Activated CD4-positive, alpha-beta memory T cell treated with anti-CD3 and anti-CD28 coated beads for 36 hours (primary cell): ENCODE measurements at regions of chr15 and their contacts with region 1.

Region 1: DNA sequence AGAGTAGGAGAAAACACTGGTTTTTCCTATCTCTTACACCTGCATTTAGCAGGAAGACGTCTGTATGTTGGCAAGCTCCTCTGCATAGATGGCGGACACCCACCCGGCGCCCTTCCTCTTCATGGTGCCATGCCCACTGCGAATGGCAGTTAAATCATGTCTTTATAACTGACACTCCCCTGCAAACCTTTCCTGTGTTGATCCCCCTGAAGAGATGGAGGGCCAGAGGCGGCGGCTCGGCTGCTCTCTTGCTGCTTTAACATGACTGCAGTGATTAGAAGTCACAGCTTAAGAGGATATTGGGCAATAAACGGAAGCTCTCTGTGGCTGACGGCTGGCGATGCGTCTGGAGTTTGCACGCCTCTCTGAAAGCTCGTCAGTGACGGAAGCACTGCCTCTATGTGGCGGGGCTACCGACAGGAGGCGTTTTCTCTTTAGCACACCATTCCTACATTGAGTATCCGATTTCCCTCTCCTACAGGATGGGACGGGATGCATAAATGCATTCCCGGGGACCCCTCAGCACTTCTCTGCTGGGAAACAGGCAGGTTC is 25.5 kb upstream of the SNRPA1 start:
- DNase-seq: peak; percentile 81
- H3K4me3 Mint-ChIP-seq: peak overlapping the region; percentile 64
- H3K27ac Mint-ChIP-seq: peak overlapping the region; percentile 59
- H3K4me1 Mint-ChIP-seq: peaks cover 11% of the 10 kb centered on the region
- H3K27me3 Mint-ChIP-seq: no peaks in the 10 kb centered on the region

Region 2: GRCh38 chr15:101277038-101277882 is 43.3 kb before region 1 on chr15 and contains the start of gene SELENOS:
- CTCF ChIA-PET with region 1: no interaction called
- POLR2A ChIA-PET with region 1: no interaction called
- intact Hi-C with region 1: no loop called
- DNase-seq: peak; percentile 90
- H3K4me3 Mint-ChIP-seq: peak within 1 kb of the TSS; percentile 92
- H3K27ac Mint-ChIP-seq: peak within 1 kb of the TSS; percentile 81
- H3K4me1 Mint-ChIP-seq: peaks cover 29% of the 10 kb centered on the region
- H3K27me3 Mint-ChIP-seq: no peaks in the 10 kb centered on the region
- total RNA-seq, gene SELENOS: 30.9 to 31.7 TPM

Region 3: GRCh38 chr15:101288908-101289513 is 31.6 kb before region 1 on chr15:
- CTCF ChIA-PET with region 1: interaction called, 10 read pairs
- POLR2A ChIA-PET with region 1: interaction called, 12 read pairs
- intact Hi-C with region 1: no loop called
- DNase-seq: peak; percentile 6
- H3K4me3 Mint-ChIP-seq: no peak overlapping the region
- H3K27ac Mint-ChIP-seq: peak overlapping the region; percentile 55
- H3K4me1 Mint-ChIP-seq: peaks cover 51% of the 10 kb centered on the region
- H3K27me3 Mint-ChIP-seq: no peaks in the 10 kb centered on the region

Region 4: GRCh38 chr15:101294731-101295606 is 25.6 kb before region 1 on chr15 and contains the start of gene SNRPA1:
- CTCF ChIA-PET with region 1: interaction called, 25 read pairs
- POLR2A ChIA-PET with region 1: interaction called, 12 read pairs
- intact Hi-C with region 1: no loop called
- DNase-seq: peak; percentile 98
- H3K4me3 Mint-ChIP-seq: peak within 1 kb of the TSS; percentile 95
- H3K27ac Mint-ChIP-seq: peak within 1 kb of the TSS; percentile 98
- H3K4me1 Mint-ChIP-seq: peaks cover 38% of the 10 kb centered on the region
- H3K27me3 Mint-ChIP-seq: no peaks in the 10 kb centered on the region
- total RNA-seq, gene SNRPA1: 167 to 173 TPM

Region 5: GRCh38 chr15:101305820-101306255 is 14.7 kb before region 1 on chr15:
- CTCF ChIA-PET with region 1: interaction called, 25 read pairs
- POLR2A ChIA-PET with region 1: interaction called, 3 read pairs
- intact Hi-C with region 1: no loop called
- DNase-seq: no peak
- H3K4me3 Mint-ChIP-seq: no peak overlapping the region
- H3K27ac Mint-ChIP-seq: no peak overlapping the region
- H3K4me1 Mint-ChIP-seq: no peaks in the 10 kb centered on the region
- H3K27me3 Mint-ChIP-seq: no peaks in the 10 kb centered on the region

Region 6: GRCh38 chr15:101333401-101333800 is 12.8 kb after region 1 on chr15:
- CTCF ChIA-PET with region 1: interaction called, 23 read pairs
- POLR2A ChIA-PET with region 1: interaction called, 7 read pairs
- intact Hi-C with region 1: no loop called
- DNase-seq: no peak
- H3K4me3 Mint-ChIP-seq: no peak overlapping the region
- H3K27ac Mint-ChIP-seq: no peak overlapping the region
- H3K4me1 Mint-ChIP-seq: peaks cover 12% of the 10 kb centered on the region
- H3K27me3 Mint-ChIP-seq: no peaks in the 10 kb centered on the region

Region 7: GRCh38 chr15:101528108-101528916 is 207.7 kb after region 1 on chr15:
- CTCF ChIA-PET with region 1: no interaction called
- POLR2A ChIA-PET with region 1: no interaction called
- intact Hi-C with region 1: no loop called
- DNase-seq: no peak
- H3K4me3 Mint-ChIP-seq: no peak overlapping the region
- H3K27ac Mint-ChIP-seq: no peak overlapping the region
- H3K4me1 Mint-ChIP-seq: no peaks in the 10 kb centered on the region
- H3K27me3 Mint-ChIP-seq: peaks cover 12% of the 10 kb centered on the region

Region 8: DNA sequence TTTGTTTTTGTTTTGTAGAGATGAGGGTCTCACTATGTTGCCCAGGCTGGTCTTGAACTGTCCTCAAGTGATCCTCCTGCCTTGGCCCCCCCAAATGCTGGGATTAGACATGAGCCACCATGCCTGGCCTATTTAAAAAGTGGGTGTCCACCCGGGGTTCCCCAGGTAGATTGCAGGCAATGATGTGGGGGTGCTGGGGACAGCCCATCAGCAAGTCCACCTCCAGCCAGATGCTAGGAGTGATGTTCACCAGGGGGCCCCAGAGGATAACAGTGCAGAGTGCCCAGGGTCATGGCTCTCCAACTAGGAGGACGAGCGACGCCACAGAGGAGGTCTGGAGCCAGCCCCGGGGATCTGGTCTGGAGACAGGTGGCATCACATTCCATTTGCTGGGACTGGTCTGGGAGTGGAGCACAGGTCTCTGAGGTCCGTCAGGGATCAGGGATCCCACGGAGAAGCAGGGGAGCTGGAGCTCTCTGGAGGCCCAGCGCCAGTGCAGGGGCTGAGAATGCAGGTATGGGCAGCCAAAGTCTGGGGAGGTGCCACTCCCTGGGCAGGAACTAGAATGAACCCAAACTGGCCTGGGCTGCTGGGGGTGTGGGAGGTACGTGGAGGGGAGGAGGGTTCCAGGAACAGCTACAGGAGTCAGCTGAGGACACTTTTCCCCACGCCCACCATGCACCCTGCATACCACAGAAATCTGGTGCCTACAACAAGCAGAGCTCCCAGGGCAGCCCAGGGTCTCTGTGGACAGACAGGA is 220.1 kb after region 1 on chr15:
- CTCF ChIA-PET with region 1: no interaction called
- POLR2A ChIA-PET with region 1: no interaction called
- intact Hi-C with region 1: no loop called
- DNase-seq: no peak
- H3K4me3 Mint-ChIP-seq: no peak overlapping the region
- H3K27ac Mint-ChIP-seq: no peak overlapping the region
- H3K4me1 Mint-ChIP-seq: no peaks in the 10 kb centered on the region
- H3K27me3 Mint-ChIP-seq: peaks cover 2% of the 10 kb centered on the region